ENCODE measurements at regions of chr1 and their contacts with region 1.

Region 1: DNA sequence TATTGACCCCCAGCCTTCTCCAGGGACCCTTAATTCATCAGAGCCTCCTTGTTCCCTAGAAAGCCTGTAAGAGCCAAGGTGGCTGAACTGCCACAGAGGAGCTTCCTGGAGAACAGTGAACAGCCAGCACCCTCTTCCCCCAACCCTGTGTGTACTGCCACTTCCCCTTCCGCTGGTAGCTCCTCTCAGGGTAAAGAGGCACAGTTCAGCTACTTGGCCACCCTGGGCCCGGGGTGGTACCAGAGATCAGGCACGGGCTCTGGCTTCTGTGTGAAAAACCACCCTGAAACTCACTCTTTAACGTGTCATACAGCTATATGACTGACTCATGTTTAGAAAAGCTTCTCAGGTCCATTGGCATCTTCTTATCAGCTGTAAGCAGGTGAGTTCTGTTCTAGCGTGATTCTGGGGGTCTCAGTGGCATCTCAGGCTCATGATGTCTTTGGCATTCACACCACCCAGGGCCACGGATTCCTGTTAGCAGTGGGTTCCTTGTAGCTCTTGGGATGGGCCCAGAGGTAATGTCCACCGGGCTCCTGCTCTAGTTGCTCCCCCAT is 22.4 kb downstream of the ARMH1 start:
- DNase-seq: no peak
- ATAC-seq: peak; percentile 74
- H3K4me3 ChIP-seq: no peak overlapping the region
- H3K27ac ChIP-seq: peak overlapping the region; percentile 45
- H3K4me1 ChIP-seq: peaks cover 51% of the 10 kb centered on the region
- H3K27me3 ChIP-seq: no peaks in the 10 kb centered on the region
- CTCF ChIP-seq: no peak
- EP300 ChIP-seq: no peak
- POLR2A ChIP-seq: 0 out of 2 replicates have a peak, but pooled peaks have one; percentile 24
- RAD21 ChIP-seq: no peak

Region 2: GRCh38 chr1:44401256-44402228 is 295.3 kb before region 1 on chr1:
- CTCF ChIA-PET with region 1: no interaction called
- POLR2A ChIA-PET with region 1: no interaction called
- RAD21 ChIA-PET with region 1: no interaction called
- SMC1A ChIA-PET with region 1: no interaction called
- in situ Hi-C with region 1: no loop called
- intact Hi-C with region 1: no loop called
- DNase-seq: no peak
- ATAC-seq: no peak
- H3K4me3 ChIP-seq: no peak overlapping the region
- H3K27ac ChIP-seq: no peak overlapping the region
- H3K4me1 ChIP-seq: no peaks in the 10 kb centered on the region
- H3K27me3 ChIP-seq: peaks cover 10 to 22% of the 10 kb centered on the region in 2 experiments
- CTCF ChIP-seq: no peak
- EP300 ChIP-seq: no peak
- POLR2A ChIP-seq: no peak
- RAD21 ChIP-seq: no peak

Region 3: GRCh38 chr1:44602634-44603628 is 93.9 kb before region 1 on chr1:
- CTCF ChIA-PET with region 1: no interaction called
- POLR2A ChIA-PET with region 1: no interaction called
- RAD21 ChIA-PET with region 1: no interaction called
- SMC1A ChIA-PET with region 1: no interaction called
- in situ Hi-C with region 1: no loop called
- intact Hi-C with region 1: no loop called
- DNase-seq: no peak
- ATAC-seq: no peak
- H3K4me3 ChIP-seq: no peak overlapping the region
- H3K27ac ChIP-seq: no peak overlapping the region
- H3K4me1 ChIP-seq: no peaks in the 10 kb centered on the region
- H3K27me3 ChIP-seq: no peaks in the 10 kb centered on the region; a peak in 2 of 4 replicates
- CTCF ChIP-seq: no peak
- EP300 ChIP-seq: no peak
- POLR2A ChIP-seq: no peak
- RAD21 ChIP-seq: no peak

Region 4: GRCh38 chr1:44684525-44684924 is 12.3 kb before region 1 on chr1:
- CTCF ChIA-PET with region 1: interaction called, 17 read pairs
- POLR2A ChIA-PET with region 1: interaction called, 8 read pairs
- RAD21 ChIA-PET with region 1: interaction called, 3 read pairs
- SMC1A ChIA-PET with region 1: interaction called, 14 read pairs
- in situ Hi-C with region 1: no loop called
- intact Hi-C with region 1: no loop called
- DNase-seq: peak; percentile 81
- ATAC-seq: peak; percentile 96
- H3K4me3 ChIP-seq: no peak overlapping the region
- H3K27ac ChIP-seq: peak overlapping the region; percentile 77
- H3K4me1 ChIP-seq: peaks cover 20% of the 10 kb centered on the region
- H3K27me3 ChIP-seq: no peaks in the 10 kb centered on the region
- CTCF ChIP-seq: peak in 1 of 3 experiments; percentile 22; a peak in 1 of 6 replicates
- EP300 ChIP-seq: peak in 1 of 2 experiments; percentile 32; a peak in 2 of 4 replicates
- POLR2A ChIP-seq: no peak
- RAD21 ChIP-seq: peak; percentile 33; the same call in 1 of the 2 replicates

Region 5: GRCh38 chr1:44707959-44708831 is 11.3 kb after region 1 on chr1:
- CTCF ChIA-PET with region 1: interaction called, 30 read pairs
- POLR2A ChIA-PET with region 1: interaction called, 3 read pairs
- RAD21 ChIA-PET with region 1: interaction called, 7 read pairs
- SMC1A ChIA-PET with region 1: interaction called, 11 read pairs
- in situ Hi-C with region 1: no loop called
- intact Hi-C with region 1: no loop called
- DNase-seq: no peak
- ATAC-seq: peak; percentile 84
- H3K4me3 ChIP-seq: peak overlapping the region; percentile 15; the same call in 1 of the 2 replicates
- H3K27ac ChIP-seq: no peak overlapping the region
- H3K4me1 ChIP-seq: peaks cover 21% of the 10 kb centered on the region
- H3K27me3 ChIP-seq: no peaks in the 10 kb centered on the region; a peak in 1 of 4 replicates
- CTCF ChIP-seq: peak; percentile 58 to 70 (median 62)
- EP300 ChIP-seq: no peak
- POLR2A ChIP-seq: no peak
- RAD21 ChIP-seq: peak; percentile 73

Region 6: DNA sequence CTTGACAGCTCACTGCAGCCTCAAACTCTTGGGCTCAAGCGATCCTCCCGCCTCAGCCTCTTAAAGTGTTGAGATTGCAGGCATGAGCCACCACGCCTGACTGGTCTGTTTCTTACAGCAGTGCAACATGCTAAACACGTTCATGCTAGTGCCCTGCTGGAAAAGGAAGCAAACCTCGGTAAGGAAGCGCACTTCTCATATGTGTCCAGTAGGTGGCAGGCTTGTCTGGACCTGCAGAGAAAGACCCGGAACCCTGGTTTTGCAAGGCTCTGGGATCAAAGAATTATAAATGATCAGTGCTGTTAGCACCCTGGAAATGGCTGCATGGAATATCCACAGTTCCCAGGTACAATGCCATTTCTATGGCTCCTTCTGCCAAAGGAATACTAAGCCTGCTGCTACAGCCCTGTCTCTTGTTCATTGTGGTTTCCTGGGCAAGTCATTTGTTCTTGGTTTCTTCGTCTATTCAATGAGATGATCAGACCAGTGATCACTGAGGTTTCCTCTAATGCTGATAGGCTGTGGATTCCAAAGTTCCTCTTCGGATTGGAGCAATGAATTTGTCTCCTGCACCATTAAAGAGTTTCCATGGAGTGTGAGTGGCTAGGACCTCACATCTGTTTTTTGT is 18.2 kb after region 1 on chr1:
- CTCF ChIA-PET with region 1: interaction called, 30 read pairs
- POLR2A ChIA-PET with region 1: interaction called, 4 read pairs
- RAD21 ChIA-PET with region 1: interaction called, 7 read pairs
- SMC1A ChIA-PET with region 1: interaction called, 8 read pairs
- in situ Hi-C with region 1: no loop called
- intact Hi-C with region 1: no loop called
- DNase-seq: peak; percentile 71
- ATAC-seq: peak; percentile 75
- H3K4me3 ChIP-seq: no peak overlapping the region
- H3K27ac ChIP-seq: peak overlapping the region; percentile 61
- H3K4me1 ChIP-seq: peaks cover 56% of the 10 kb centered on the region
- H3K27me3 ChIP-seq: no peaks in the 10 kb centered on the region
- CTCF ChIP-seq: peak; percentile 89 to 96 (median 90)
- EP300 ChIP-seq: no peak
- POLR2A ChIP-seq: no peak
- RAD21 ChIP-seq: peak; percentile 75